ENCODE measurements at regions of chr2 and their contacts with region 1.

Region 1: GRCh38 chr2:217785544-217786045 is 217.2 kb downstream of the TNS1 start:
- DNase-seq: peak; percentile 90
- H3K4me3 ChIP-seq: no peak overlapping the region; a peak in 1 of 4 replicates
- H3K27ac ChIP-seq: no peak overlapping the region
- H3K4me1 ChIP-seq: peaks cover 0 to 9% of the 10 kb centered on the region in 2 experiments; a peak in 2 of 4 replicates
- H3K27me3 ChIP-seq: no peaks in the 10 kb centered on the region
- CTCF ChIP-seq: peak; percentile 94
- EP300 ChIP-seq: no peak
- RAD21 ChIP-seq: peak; percentile 98

Region 2: GRCh38 chr2:217816396-217816869 is 30.8 kb after region 1 on chr2:
- CTCF ChIA-PET with region 1: interaction called, 11 read pairs
- POLR2A ChIA-PET with region 1: no interaction called
- DNase-seq: peak; percentile 47
- H3K4me3 ChIP-seq: no peak overlapping the region
- H3K27ac ChIP-seq: peak overlapping the region in 1 of 2 experiments; percentile 28; a peak in 1 of 4 replicates
- H3K4me1 ChIP-seq: peaks cover 0 to 9% of the 10 kb centered on the region in 2 experiments; a peak in 1 of 4 replicates
- H3K27me3 ChIP-seq: no peaks in the 10 kb centered on the region
- CTCF ChIP-seq: no peak
- EP300 ChIP-seq: no peak
- RAD21 ChIP-seq: no peak

Region 3: GRCh38 chr2:217886720-217887309 is 101.2 kb after region 1 on chr2:
- CTCF ChIA-PET with region 1: interaction called, 360 read pairs
- POLR2A ChIA-PET with region 1: interaction called, 8 read pairs
- DNase-seq: peak; percentile 68
- H3K4me3 ChIP-seq: no peak overlapping the region; a peak in 1 of 4 replicates
- H3K27ac ChIP-seq: peak overlapping the region; percentile 30 to 41; a peak in 3 of 4 replicates
- H3K4me1 ChIP-seq: peaks cover 0 to 28% of the 10 kb centered on the region in 2 experiments; a peak in 1 of 4 replicates
- H3K27me3 ChIP-seq: no peaks in the 10 kb centered on the region
- CTCF ChIP-seq: peak; percentile 80
- EP300 ChIP-seq: no peak
- RAD21 ChIP-seq: peak; percentile 74

Region 4: DNA sequence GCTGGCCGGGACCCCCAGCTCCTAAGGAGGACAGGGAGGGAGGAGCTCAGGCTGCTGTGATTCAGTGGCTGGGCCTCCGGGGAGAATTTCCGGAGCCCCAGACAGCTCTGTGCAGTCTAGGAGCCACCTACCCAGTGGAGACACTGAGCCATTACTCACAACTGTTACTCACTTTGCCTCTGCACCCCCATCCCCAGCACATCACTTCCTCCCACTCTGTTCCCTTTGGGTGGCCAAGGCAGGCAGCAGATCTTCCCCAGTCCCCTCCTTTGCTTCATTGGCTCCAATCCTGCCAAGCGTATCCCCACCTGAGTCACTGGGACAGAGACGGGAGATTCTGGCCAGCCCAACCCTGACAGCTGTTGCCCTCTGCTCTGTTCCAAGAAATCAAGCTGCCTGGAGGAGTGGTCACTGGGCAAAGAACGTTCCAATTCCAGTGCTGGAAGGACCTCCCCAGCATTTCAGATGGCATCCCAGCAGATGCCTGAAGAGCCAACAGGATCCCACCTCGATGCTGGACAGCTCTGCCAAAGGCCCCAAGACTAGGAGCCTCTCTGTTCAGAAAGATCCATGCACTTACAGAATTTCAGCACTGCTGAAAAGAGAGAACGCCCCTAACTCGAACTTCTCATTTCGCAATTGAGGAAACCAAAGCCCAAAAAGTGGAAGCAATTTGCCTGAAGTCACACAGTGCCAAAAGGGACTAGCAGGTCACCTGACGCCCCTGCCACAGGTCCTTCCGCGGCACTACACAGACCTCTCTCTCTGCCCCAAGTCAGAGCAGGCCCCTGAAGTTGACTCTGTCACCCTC is 148.9 kb after region 1 on chr2:
- CTCF ChIA-PET with region 1: interaction called, 16 read pairs
- POLR2A ChIA-PET with region 1: no interaction called
- DNase-seq: no peak
- H3K4me3 ChIP-seq: 0 out of 4 replicates have a peak overlapping the region, but pooled peaks of 1 of the 2 experiments have one; percentile 15
- H3K27ac ChIP-seq: peak overlapping the region; percentile 86 to 96
- H3K4me1 ChIP-seq: peaks cover 75 to 94% of the 10 kb centered on the region in 2 experiments
- H3K27me3 ChIP-seq: no peaks in the 10 kb centered on the region
- CTCF ChIP-seq: no peak
- EP300 ChIP-seq: peak in 1 of 2 experiments; percentile 80; a peak in 1 of 4 replicates
- RAD21 ChIP-seq: no peak

Region 5: GRCh38 chr2:217972490-217972889 is 186.9 kb after region 1 on chr2:
- CTCF ChIA-PET with region 1: interaction called, 21 read pairs
- POLR2A ChIA-PET with region 1: no interaction called
- DNase-seq: no peak
- H3K4me3 ChIP-seq: no peak overlapping the region
- H3K27ac ChIP-seq: no peak overlapping the region; a peak in 1 of 4 replicates
- H3K4me1 ChIP-seq: peaks cover 0 to 3% of the 10 kb centered on the region in 2 experiments; a peak in 1 of 4 replicates
- H3K27me3 ChIP-seq: no peaks in the 10 kb centered on the region
- CTCF ChIP-seq: no peak
- EP300 ChIP-seq: no peak
- RAD21 ChIP-seq: no peak

Region 6: DNA sequence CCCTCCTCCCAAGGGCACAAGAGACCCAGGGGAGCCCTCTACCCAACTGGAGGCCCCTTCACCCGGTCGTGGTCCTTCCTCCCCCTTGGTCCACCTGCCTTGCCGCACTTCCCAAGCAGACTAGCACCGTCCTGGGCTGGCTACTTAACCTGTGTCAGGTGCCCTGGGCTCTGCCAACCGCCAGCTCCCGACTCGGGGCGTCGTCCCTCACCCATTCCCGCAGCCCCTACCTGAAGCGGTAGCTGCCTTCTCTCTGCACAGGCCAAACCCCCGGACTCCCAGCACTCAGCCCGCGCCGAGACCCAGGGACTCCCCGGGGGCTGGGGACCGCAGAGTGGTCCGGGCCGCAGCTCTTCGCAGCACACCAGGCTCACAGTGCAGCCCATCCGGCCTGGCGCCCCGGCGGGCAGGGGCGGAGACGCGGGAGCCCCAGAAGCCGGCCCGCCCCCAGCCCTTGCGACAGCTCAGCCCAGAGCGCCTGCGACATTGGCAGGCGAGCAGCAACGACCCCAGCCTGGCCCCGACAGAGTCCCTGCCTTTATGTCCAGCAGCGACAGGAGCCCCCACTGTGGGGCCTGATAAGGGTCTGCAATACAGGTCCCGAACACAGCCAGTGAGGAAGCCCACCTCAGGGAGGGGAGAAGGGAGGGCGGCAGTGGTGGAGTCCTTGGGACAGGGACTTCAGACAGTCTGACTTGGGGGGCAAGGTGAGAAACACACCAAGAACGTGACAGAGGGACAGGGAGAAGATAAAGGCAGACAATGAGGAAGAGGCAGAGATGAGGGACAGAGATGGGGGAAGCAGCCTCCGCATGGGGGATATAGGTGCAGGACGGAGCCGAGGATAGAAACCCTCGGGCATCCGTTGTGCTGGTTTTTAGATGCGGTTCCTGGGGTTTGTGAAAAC is 248.2 kb after region 1 on chr2:
- CTCF ChIA-PET with region 1: interaction called, 161 read pairs
- POLR2A ChIA-PET with region 1: interaction called, 4 read pairs
- DNase-seq: no peak
- H3K4me3 ChIP-seq: no peak overlapping the region
- H3K27ac ChIP-seq: no peak overlapping the region
- H3K4me1 ChIP-seq: peaks cover 0 to 24% of the 10 kb centered on the region in 2 experiments; a peak in 1 of 4 replicates
- H3K27me3 ChIP-seq: no peaks in the 10 kb centered on the region
- CTCF ChIP-seq: no peak
- EP300 ChIP-seq: no peak
- RAD21 ChIP-seq: no peak

Region 7: GRCh38 chr2:218074031-218074430 is 288.4 kb after region 1 on chr2:
- CTCF ChIA-PET with region 1: interaction called, 217 read pairs
- POLR2A ChIA-PET with region 1: no interaction called
- DNase-seq: no peak
- H3K4me3 ChIP-seq: no peak overlapping the region
- H3K27ac ChIP-seq: no peak overlapping the region
- H3K4me1 ChIP-seq: peaks cover 0 to 1% of the 10 kb centered on the region in 2 experiments; a peak in 1 of 4 replicates
- H3K27me3 ChIP-seq: peaks cover 12% of the 10 kb centered on the region; the same call in 1 of the 2 replicates
- CTCF ChIP-seq: peak; percentile 41
- EP300 ChIP-seq: no peak
- RAD21 ChIP-seq: no peak

Measured in SK-N-SH (cell line).